PC-3 (cell line): ENCODE measurements at regions of chr2 and their contacts with region 1.

Region 1: DNA sequence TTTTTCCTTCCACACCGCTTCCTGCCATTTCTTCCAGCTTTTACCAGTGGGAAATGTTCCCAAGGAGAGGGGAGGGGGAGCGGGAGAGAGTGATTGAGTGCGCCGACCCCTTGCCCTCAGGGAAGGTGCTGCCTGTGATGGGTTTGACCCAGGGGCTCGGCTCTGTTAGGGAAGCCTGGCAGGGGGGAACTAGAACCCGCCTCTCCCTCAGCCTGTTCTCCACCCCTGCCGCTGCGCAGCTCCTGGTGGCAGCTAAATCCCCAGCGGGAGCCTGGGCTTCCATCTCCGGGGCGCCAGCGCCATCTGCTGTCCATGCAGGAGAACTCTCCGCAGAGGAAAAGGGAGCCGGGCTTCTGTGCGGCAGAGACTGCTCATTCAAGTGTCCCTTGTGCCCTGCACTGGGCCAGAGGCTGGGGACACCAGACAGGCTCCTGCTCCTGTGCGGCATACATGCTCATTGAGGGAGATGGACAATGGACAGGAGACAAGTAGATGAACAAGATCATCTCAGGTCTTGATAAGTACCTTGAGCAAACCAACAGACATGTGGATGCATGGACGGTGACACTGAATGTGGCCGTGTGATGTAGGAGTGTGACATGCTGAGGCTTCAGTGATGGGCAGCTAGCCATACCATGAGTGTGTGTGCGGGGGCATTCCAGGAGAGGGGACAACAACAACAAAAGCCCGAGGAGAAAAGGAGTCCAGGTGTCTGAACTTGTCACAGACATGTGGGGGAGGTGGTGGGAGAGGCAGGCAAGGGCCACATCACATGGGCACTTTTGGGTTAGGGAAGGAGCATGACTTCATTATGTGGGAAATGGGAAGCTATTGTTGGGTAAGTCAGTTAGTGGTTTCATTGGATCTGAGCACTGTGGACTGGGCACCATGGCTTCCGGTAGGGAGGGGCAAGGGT is 13.3 kb downstream of the CHPF start:
- DNase-seq: peak; percentile 91
- ATAC-seq: peak; percentile 91
- H3K4me3 ChIP-seq: peak overlapping the region; percentile 57; the same call in 1 of the 2 replicates
- H3K27ac ChIP-seq: no peak overlapping the region
- H3K4me1 ChIP-seq: no peaks in the 10 kb centered on the region
- H3K27me3 ChIP-seq: peaks cover 10% of the 10 kb centered on the region
- CTCF ChIP-seq: peak; percentile 96

Region 2: GRCh38 chr2:219402665-219403515 is 127.4 kb before region 1 on chr2:
- CTCF ChIA-PET with region 1: interaction called, 21 read pairs
- POLR2A ChIA-PET with region 1: no interaction called
- intact Hi-C with region 1: loop called (anchors 1 kb)
- DNase-seq: peak; percentile 90
- ATAC-seq: peak; percentile 54
- H3K4me3 ChIP-seq: no peak overlapping the region
- H3K27ac ChIP-seq: no peak overlapping the region
- H3K4me1 ChIP-seq: peaks cover 34% of the 10 kb centered on the region
- H3K27me3 ChIP-seq: no peaks in the 10 kb centered on the region
- CTCF ChIP-seq: peak; percentile 95

Region 3: DNA sequence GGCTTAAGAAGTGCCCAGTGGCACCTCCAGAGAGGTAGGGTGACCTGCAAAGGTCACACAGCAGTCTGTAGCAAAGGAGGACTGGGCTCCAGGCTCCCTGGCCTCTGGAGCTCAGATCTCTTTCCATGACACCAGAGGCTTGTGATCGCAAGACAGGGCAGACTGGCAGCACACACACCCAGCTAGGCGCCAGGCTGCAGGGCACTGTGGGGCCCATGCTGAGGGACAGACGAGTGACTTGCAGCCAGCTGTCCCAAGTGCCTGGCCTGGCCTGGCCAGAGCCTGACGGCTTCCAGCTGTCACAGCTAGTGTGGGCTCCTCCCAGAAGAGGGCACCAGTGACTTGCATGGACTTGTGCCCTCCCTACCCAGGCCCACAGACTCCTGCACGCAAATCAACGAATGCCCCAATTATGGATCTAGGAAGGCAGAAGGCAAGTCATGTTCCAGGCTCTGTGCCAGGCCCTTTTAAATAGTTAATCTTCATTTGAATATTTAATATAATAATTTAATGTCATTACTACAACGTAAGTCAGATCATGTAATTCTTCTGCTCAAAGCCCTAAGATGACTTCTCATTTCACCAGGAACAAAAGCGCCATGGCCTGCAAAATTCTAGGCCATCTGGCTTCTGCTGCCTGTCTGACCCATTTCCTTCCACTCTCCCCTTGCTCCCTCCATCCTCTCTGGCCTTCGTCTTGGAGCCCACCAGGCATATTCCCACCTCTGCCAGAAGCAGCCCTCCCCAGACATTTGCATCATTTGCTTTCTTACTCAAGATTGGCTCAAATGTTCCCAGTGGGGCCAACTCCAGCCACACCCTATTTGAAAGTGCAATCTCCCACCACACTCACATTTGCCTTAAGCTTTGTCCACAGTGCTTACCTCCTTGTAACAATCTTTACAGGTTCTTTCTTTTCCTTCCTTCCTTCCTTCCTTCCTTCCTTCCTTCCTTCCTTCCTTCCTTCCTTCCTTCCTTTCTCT is 99.4 kb before region 1 on chr2:
- CTCF ChIA-PET with region 1: interaction called, 6 read pairs
- POLR2A ChIA-PET with region 1: no interaction called
- intact Hi-C with region 1: loop called (anchors 1 kb)
- DNase-seq: peak; percentile 67
- ATAC-seq: peak; percentile 100
- H3K4me3 ChIP-seq: no peak overlapping the region
- H3K27ac ChIP-seq: no peak overlapping the region
- H3K4me1 ChIP-seq: no peaks in the 10 kb centered on the region
- H3K27me3 ChIP-seq: no peaks in the 10 kb centered on the region
- CTCF ChIP-seq: peak; percentile 65

Region 4: DNA sequence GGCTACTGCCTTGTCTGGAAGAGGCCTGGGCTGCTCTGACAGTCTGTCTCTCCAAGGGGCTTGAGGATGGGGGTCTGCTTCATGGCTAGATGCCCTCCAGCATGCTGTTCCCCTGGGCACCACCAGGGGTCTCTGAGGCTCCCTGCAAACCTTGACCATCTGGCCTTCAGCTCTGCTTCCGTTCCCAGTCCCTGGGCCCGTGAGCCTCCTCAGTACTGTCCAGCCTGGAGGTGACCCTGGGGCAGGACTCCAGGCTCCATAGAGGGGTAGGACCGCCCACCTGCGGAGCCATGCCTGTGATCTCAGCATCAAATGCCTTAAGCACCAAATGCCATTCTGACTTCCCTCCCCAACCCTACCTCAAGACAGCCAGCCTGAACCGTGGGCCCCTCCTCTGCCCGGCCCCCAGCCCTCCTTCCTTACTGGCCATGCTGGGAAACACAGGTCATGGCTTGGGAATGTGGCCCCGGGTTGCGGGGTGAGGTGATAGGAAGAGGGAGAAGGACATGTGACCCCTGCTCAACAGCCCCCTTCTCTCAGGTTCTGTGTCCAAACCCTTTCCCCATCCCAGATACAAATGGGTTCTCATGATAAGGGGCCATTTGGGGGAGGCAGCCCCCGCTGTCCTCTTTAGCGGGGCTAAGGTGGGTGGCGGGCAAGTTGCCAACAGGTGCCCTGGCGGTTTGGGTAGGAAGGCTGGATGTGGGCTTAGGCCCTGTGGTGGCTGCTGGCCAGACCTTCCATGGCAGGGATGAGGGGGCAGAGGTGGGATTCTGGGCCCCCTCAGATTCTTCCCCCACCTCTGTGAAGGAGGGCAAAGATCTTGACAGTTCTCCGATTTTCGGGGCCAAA is 70.6 kb before region 1 on chr2:
- CTCF ChIA-PET with region 1: interaction called, 15 read pairs
- POLR2A ChIA-PET with region 1: no interaction called
- intact Hi-C with region 1: no loop called
- DNase-seq: peak; percentile 51
- ATAC-seq: peak; percentile 73
- H3K4me3 ChIP-seq: no peak overlapping the region
- H3K27ac ChIP-seq: no peak overlapping the region
- H3K4me1 ChIP-seq: peaks cover 17% of the 10 kb centered on the region
- H3K27me3 ChIP-seq: no peaks in the 10 kb centered on the region
- CTCF ChIP-seq: peak; percentile 89

Region 5: GRCh38 chr2:219475697-219476651 is 54.3 kb before region 1 on chr2:
- CTCF ChIA-PET with region 1: interaction called, 5 read pairs
- POLR2A ChIA-PET with region 1: no interaction called
- intact Hi-C with region 1: loop called (anchors 1 kb)
- DNase-seq: peak; percentile 76
- ATAC-seq: peak; percentile 79
- H3K4me3 ChIP-seq: no peak overlapping the region
- H3K27ac ChIP-seq: no peak overlapping the region
- H3K4me1 ChIP-seq: 0 out of 2 replicates have a peak, but pooled peaks cover 4% of the 10 kb centered on the region
- H3K27me3 ChIP-seq: no peaks in the 10 kb centered on the region
- CTCF ChIP-seq: peak; percentile 95

Region 6: DNA sequence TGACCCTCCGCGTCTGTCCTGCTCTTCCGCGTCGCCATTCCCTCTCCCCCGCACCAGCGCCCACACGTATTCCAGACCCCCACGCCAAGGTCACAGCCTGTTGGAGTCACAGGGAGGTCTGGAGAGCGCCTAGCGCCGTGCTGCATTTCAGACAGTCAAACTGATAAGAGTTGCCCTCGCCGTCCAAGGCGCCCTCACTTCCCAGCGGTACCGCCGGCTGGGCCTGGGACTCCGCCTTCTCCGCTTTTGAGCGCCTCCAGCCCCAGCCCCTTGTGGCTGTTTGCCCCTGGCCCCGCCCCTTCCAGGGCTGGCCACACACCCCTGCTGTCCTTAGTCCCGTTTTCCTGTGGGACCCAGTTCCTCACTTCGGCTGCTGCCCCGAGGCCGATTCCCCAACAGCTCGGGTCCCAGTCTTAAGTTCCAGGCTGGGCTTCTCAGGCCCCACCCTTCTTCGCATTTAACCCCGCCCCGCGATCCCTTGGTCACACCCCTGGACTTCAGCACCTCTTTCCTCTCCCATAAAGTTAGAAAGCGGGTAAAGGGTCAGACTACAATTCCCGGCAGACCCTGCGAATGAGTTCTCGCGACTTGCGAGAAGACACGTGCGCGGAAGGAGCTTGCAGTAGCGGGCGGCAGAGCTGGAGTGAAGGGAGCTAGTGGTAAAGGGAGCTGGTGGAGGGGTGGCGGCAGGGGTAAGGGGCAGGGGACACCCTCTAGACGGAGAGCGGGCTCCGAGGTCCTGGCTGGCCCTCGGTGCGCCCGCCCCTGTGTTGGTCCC is 31.8 kb before region 1 on chr2 and contains the start of gene GMPPA:
- CTCF ChIA-PET with region 1: interaction called, 47 read pairs
- POLR2A ChIA-PET with region 1: interaction called, 3 read pairs
- intact Hi-C with region 1: loop called (anchors 1 kb)
- DNase-seq: peak; percentile 99
- ATAC-seq: peak; percentile 83
- H3K4me3 ChIP-seq: peak within 1 kb of the TSS; percentile 85
- H3K27ac ChIP-seq: peak within 1 kb of the TSS; percentile 68
- H3K4me1 ChIP-seq: peaks cover 21% of the 10 kb centered on the region
- H3K27me3 ChIP-seq: no peaks in the 10 kb centered on the region
- CTCF ChIP-seq: no peak
- total RNA-seq, gene GMPPA: 78.1 and 85.7 TPM in 2 replicates

Region 7: DNA sequence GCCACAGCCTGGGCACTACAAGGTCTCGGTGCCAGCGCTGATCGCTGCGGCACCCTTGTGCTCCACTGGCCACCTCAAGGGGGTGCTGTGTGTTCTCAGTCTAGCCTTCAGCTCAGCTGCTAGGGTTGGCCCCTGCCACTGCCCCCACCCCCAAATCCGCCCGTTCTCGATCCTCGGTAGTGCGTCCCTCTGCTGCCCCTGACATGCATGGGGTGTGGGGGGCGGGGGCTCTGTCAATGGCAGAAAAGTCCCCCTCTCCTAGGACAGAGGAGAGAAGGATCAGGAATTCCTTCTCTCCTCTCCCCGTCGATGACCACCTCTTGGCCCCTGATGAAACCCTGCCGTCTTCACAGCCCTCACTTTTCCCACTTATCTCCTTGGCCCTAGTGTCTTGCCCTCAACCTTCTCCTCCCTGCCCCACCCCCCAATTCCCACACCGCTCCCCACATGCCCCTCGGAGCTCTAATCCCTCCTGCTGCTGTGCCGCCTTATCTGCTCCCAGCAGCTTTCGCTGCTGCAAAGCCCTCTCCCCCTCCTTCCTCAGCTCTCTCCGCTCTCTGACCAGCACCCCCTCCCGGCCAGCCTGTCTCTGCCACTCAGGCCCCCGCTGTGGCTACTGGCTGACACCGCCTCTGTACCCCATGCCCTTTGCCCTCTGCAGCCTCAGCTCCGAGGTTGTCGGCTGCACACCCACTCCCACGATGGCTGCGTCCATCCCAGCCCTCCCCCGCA is 20.4 kb before region 1 on chr2:
- CTCF ChIA-PET with region 1: interaction called, 15 read pairs
- POLR2A ChIA-PET with region 1: no interaction called
- intact Hi-C with region 1: no loop called
- DNase-seq: peak; percentile 61
- ATAC-seq: peak; percentile 81
- H3K4me3 ChIP-seq: peak overlapping the region; percentile 44
- H3K27ac ChIP-seq: no peak overlapping the region
- H3K4me1 ChIP-seq: no peaks in the 10 kb centered on the region; the same call in 1 of the 2 replicates
- H3K27me3 ChIP-seq: peaks cover 47% of the 10 kb centered on the region
- CTCF ChIP-seq: peak; percentile 66